ENCODE measurements at regions of chr11 and their contacts with region 1.

Region 1: DNA sequence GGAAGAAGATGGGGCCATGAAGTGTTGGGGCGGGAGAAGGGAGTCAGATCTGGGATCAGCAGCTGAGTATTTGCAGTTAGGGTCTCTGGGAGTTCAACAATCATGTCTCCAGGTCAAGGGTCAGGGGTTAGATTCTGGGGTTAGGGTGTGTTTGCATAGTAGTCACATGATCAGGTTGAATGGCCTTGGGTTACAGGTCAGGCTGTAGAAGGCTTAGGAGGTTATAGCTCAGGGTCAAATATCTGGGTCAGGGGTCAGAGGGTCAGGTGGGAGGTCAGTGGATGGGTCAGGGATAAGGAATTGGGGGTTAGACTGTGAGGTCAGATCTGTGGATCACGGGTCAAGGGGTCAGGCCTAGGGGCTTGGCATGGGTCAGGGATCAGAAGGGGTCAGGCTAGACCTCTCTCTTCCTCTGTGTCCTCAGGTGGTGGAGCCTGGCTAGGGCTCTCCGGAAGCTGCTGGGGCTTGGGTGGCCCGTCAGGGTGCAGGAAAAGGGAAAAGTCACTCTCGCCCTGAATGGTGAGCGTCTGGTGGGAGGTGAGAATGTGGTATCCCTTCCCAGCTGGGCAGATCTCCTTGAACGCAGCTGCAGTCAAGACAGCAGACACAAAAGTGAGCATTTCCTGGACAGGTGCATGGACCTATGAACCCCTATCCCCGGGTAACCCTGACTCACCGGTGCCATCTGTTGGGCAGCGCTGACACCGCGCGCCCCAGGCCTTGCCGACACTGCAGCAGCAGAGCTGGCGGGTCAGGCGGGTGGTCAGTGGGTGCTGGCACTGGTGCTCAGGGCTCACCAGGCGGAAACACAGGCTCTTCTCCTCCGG is 6.4 kb downstream of the LTBP3 start:
- DNase-seq: peak; percentile 85
- H3K4me3 ChIP-seq: no peak overlapping the region
- H3K27ac ChIP-seq: no peak overlapping the region
- H3K4me1 ChIP-seq: peaks cover 16 to 27% of the 10 kb centered on the region in 2 experiments; a peak in 3 of 4 replicates
- H3K27me3 ChIP-seq: no peaks in the 10 kb centered on the region
- CTCF ChIP-seq: peak; percentile 62
- EP300 ChIP-seq: no peak
- RAD21 ChIP-seq: peak; percentile 43

Region 2: GRCh38 chr11:65530157-65530496 is 21.7 kb before region 1 on chr11:
- CTCF ChIA-PET with region 1: interaction called, 13 read pairs
- POLR2A ChIA-PET with region 1: interaction called, 3 read pairs
- DNase-seq: peak; percentile 34
- H3K4me3 ChIP-seq: no peak overlapping the region
- H3K27ac ChIP-seq: no peak overlapping the region
- H3K4me1 ChIP-seq: peaks cover 5 to 11% of the 10 kb centered on the region in 2 experiments; a peak in 3 of 4 replicates
- H3K27me3 ChIP-seq: no peaks in the 10 kb centered on the region
- CTCF ChIP-seq: peak; percentile 43
- EP300 ChIP-seq: no peak
- RAD21 ChIP-seq: no peak